ENCODE measurements at regions of chr13 and their contacts with region 1.

Region 1: DNA sequence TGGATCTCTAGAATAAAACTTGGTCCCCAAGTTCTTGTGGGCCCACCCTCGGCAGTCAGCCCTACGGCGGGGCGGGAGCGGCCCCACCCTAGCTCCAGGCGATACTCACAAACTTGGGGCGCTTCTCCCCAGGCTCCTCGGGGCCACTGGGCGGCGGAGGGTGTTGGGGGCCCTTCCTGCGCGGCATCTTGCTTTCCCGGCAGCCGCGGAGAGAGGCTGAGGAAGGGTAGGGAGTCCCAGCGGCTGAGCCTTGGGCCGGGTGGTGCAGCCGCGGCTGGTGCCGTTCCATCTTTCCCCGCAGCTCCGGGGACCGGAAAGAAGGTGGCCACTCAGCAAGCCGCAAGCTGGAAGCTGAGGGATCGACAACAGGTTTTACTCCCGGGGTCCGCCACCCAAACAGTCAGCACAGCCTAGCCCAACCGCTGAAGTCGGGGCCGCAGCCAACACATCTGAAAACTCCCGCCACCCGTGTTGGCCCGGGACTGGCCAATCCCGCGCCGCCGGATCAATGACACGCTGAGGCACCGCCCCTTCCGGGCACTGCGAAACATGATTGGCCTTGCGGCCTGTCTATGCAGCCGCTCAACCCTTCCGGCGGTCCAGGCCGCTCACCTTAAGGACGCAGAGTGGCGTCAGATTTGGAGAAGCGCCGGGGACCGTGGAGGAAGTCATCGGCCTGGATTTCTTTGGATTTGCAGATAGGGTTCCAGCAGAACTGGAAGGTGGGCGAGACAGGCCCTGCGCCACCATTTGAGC is at the start of gene DIAPH3:
- DNase-seq: peak; percentile 92
- ATAC-seq: peak; percentile 100
- H3K4me3 ChIP-seq: peak within 1 kb of the TSS; percentile 76 to 93 (median 83)
- H3K4me3 Mint-ChIP-seq: peak within 1 kb of the TSS; percentile 90
- H3K27ac ChIP-seq: peak within 1 kb of the TSS; percentile 53 to 62
- H3K27ac Mint-ChIP-seq: peak within 1 kb of the TSS; percentile 90
- H3K4me1 ChIP-seq: peaks cover 7 to 13% of the 10 kb centered on the region in 2 donors
- H3K4me1 Mint-ChIP-seq: peaks cover 21% of the 10 kb centered on the region
- H3K27me3 ChIP-seq: peaks cover 0 to 3% (median 0%) of the 10 kb centered on the region in 4 experiments
- H3K27me3 Mint-ChIP-seq: peaks cover 7% of the 10 kb centered on the region
- CTCF ChIP-seq: no peak
- total RNA-seq, gene DIAPH3: 0.10 and 0.15 TPM in 2 replicates

Region 2: GRCh38 chr13:59568306-59568705 is 595.4 kb before region 1 on chr13:
- CTCF ChIA-PET with region 1: no interaction called
- POLR2A ChIA-PET with region 1: no interaction called
- intact Hi-C with region 1: no loop called
- DNase-seq: no peak
- ATAC-seq: no peak
- H3K4me3 ChIP-seq: no peak overlapping the region
- H3K4me3 Mint-ChIP-seq: no peak overlapping the region
- H3K27ac ChIP-seq: no peak overlapping the region
- H3K27ac Mint-ChIP-seq: no peak overlapping the region
- H3K4me1 ChIP-seq: no peaks in the 10 kb centered on the region
- H3K4me1 Mint-ChIP-seq: no peaks in the 10 kb centered on the region
- H3K27me3 ChIP-seq: no peaks in the 10 kb centered on the region
- H3K27me3 Mint-ChIP-seq: no peaks in the 10 kb centered on the region
- CTCF ChIP-seq: no peak

Region 3: GRCh38 chr13:60396783-60397703 is 233.4 kb after region 1 on chr13 and contains the start of gene TDRD3:
- CTCF ChIA-PET with region 1: interaction called, 4 read pairs
- POLR2A ChIA-PET with region 1: interaction called, 3 read pairs
- intact Hi-C with region 1: loop called (anchors 1 kb)
- DNase-seq: peak; percentile 91
- ATAC-seq: peak; percentile 70
- H3K4me3 ChIP-seq: peak within 1 kb of the TSS; percentile 71 to 93 (median 79)
- H3K4me3 Mint-ChIP-seq: peak within 1 kb of the TSS; percentile 97
- H3K27ac ChIP-seq: peak within 1 kb of the TSS; percentile 86 to 93
- H3K27ac Mint-ChIP-seq: peak within 1 kb of the TSS; percentile 99
- H3K4me1 ChIP-seq: peaks cover 15 to 19% of the 10 kb centered on the region in 2 donors
- H3K4me1 Mint-ChIP-seq: peaks cover 38% of the 10 kb centered on the region
- H3K27me3 ChIP-seq: no peaks in the 10 kb centered on the region
- H3K27me3 Mint-ChIP-seq: no peaks in the 10 kb centered on the region
- CTCF ChIP-seq: peak; percentile 83
- total RNA-seq, gene TDRD3: 23.7 and 27.3 TPM in 2 replicates

Region 4: DNA sequence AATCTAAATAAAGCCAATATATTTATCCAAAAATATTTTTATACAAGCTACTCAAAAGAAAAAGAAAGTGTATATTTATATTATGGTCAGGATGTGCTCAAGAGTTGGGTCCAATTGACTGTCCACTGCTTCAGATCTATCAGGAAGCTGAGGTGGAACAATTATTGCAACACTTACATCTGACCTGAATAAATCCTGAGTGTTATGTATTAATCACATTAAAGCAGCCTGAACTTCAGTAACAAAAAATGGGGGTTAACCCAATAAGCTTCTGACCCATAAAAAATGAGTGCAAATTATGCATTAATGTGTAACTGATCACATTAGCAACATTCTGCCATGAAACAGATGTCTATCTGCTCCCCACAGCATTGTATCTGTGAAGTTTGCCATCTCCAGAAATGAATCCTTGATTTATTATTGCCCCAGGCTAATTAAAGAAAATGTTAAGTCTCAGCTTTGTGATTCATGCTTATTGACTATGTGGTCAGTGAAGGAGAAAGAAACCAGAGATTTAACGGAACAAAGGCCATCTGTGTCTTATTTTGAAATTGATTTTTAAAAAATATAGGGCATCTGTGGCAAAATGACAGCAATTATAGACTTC is 947.0 kb after region 1 on chr13:
- CTCF ChIA-PET with region 1: no interaction called
- POLR2A ChIA-PET with region 1: no interaction called
- intact Hi-C with region 1: no loop called
- DNase-seq: no peak
- ATAC-seq: no peak
- H3K4me3 ChIP-seq: no peak overlapping the region
- H3K4me3 Mint-ChIP-seq: no peak overlapping the region
- H3K27ac ChIP-seq: no peak overlapping the region
- H3K27ac Mint-ChIP-seq: no peak overlapping the region
- H3K4me1 ChIP-seq: no peaks in the 10 kb centered on the region
- H3K4me1 Mint-ChIP-seq: no peaks in the 10 kb centered on the region
- H3K27me3 ChIP-seq: no peaks in the 10 kb centered on the region
- H3K27me3 Mint-ChIP-seq: no peaks in the 10 kb centered on the region
- CTCF ChIP-seq: no peak